ENCODE measurements at regions of chr13 and their contacts with region 1.

Region 1: DNA sequence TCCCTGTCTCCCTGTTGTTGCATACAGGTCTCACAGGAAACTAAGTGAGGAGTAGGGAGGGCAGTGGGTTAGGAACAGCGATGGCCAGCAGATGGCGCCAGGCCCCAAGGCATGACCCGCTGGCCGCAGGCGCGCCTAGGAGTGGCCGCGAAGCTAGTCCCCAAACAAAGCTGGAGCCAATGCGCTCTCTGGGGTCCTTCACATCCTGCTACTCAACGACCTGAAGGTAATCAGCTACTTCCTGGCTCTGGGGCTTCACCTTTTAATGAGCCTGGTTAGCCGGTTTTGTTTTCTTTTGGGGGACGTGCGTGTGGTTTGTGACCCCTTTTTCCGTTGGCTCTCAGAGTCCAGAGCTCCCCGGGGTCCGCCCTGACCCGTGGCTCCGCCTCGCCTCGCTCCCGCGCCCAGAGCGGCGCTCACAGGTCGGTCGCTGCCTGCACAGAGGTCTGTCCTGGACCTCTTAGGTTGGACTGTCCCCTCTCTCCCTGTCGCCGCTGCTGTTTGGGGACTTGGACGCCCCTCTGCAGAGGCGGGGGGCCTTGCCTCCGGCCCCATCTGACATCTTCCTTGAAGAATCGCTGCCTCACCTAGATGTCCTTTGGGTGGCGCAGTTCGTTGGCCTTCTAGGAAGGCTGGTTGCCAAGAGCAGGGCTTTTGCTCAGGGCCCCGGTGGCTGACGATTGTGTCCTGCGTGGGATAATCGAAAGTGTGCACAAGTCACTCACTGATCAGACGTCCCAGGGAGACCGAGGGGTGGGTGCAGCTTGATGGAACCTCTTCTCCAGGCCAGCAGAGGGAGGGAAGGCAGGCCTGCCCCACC is 62.1 kb upstream of the GTF3A start:
- DNase-seq: peak; percentile 69
- ATAC-seq: peak; percentile 96
- H3K4me3 ChIP-seq: peak overlapping the region; percentile 40 to 55
- H3K27ac ChIP-seq: no peak overlapping the region
- H3K4me1 ChIP-seq: peaks cover 7 to 11% of the 10 kb centered on the region in 2 experiments
- H3K27me3 ChIP-seq: no peaks in the 10 kb centered on the region
- CTCF ChIP-seq: peak; percentile 80 to 91 (median 89)
- POLR2A ChIP-seq: no peak
- RAD21 ChIP-seq: peak; percentile 93

Region 2: GRCh38 chr13:26971990-26972887 is 390.0 kb before region 1 on chr13:
- CTCF ChIA-PET with region 1: interaction called, 12 read pairs
- POLR2A ChIA-PET with region 1: no interaction called
- RAD21 ChIA-PET with region 1: no interaction called
- intact Hi-C with region 1: no loop called
- DNase-seq: peak; percentile 26
- ATAC-seq: peak; percentile 77
- H3K4me3 ChIP-seq: no peak overlapping the region
- H3K27ac ChIP-seq: no peak overlapping the region; the same call in 1 of the 2 replicates
- H3K4me1 ChIP-seq: no peaks in the 10 kb centered on the region
- H3K27me3 ChIP-seq: no peaks in the 10 kb centered on the region
- CTCF ChIP-seq: peak in 2 of 3 experiments; percentile 35 to 51; a peak in 4 of 6 replicates
- POLR2A ChIP-seq: no peak
- RAD21 ChIP-seq: peak; percentile 31; the same call in 1 of the 2 replicates

Region 3: GRCh38 chr13:27177852-27178251 is 184.4 kb before region 1 on chr13:
- CTCF ChIA-PET with region 1: no interaction called
- POLR2A ChIA-PET with region 1: no interaction called
- RAD21 ChIA-PET with region 1: no interaction called
- intact Hi-C with region 1: loop called (anchors 5 kb)
- DNase-seq: no peak
- ATAC-seq: peak; percentile 83
- H3K4me3 ChIP-seq: no peak overlapping the region
- H3K27ac ChIP-seq: no peak overlapping the region
- H3K4me1 ChIP-seq: peaks cover 11 to 14% of the 10 kb centered on the region in 2 experiments; a peak in 3 of 4 replicates
- H3K27me3 ChIP-seq: no peaks in the 10 kb centered on the region
- CTCF ChIP-seq: peak; percentile 5 to 40 (median 33); a peak in 3 of 6 replicates
- POLR2A ChIP-seq: no peak
- RAD21 ChIP-seq: peak; percentile 52

Region 4: GRCh38 chr13:27309967-27310598 is 52.2 kb before region 1 on chr13:
- CTCF ChIA-PET with region 1: no interaction called
- POLR2A ChIA-PET with region 1: no interaction called
- RAD21 ChIA-PET with region 1: no interaction called
- intact Hi-C with region 1: no loop called
- DNase-seq: peak; percentile 56
- ATAC-seq: peak; percentile 76
- H3K4me3 ChIP-seq: peak overlapping the region in 1 of 2 experiments; percentile 25; a peak in 2 of 4 replicates
- H3K27ac ChIP-seq: peak overlapping the region; percentile 31; the same call in 1 of the 2 replicates
- H3K4me1 ChIP-seq: peaks cover 20 to 36% of the 10 kb centered on the region in 2 experiments
- H3K27me3 ChIP-seq: no peaks in the 10 kb centered on the region
- CTCF ChIP-seq: no peak
- POLR2A ChIP-seq: no peak
- RAD21 ChIP-seq: no peak

Region 5: GRCh38 chr13:27374650-27375049 is 12.4 kb after region 1 on chr13:
- CTCF ChIA-PET with region 1: interaction called, 31 read pairs
- POLR2A ChIA-PET with region 1: interaction called, 3 read pairs
- RAD21 ChIA-PET with region 1: interaction called in 1 of 2 experiments, 3 read pairs
- intact Hi-C with region 1: no loop called
- DNase-seq: peak; percentile 85
- ATAC-seq: peak; percentile 96
- H3K4me3 ChIP-seq: no peak overlapping the region
- H3K27ac ChIP-seq: no peak overlapping the region
- H3K4me1 ChIP-seq: peaks cover 12 to 22% of the 10 kb centered on the region in 2 experiments; a peak in 3 of 4 replicates
- H3K27me3 ChIP-seq: no peaks in the 10 kb centered on the region
- CTCF ChIP-seq: peak; percentile 67 to 82 (median 79); a peak in 5 of 6 replicates
- POLR2A ChIP-seq: no peak
- RAD21 ChIP-seq: peak; percentile 80

Region 6: GRCh38 chr13:27953676-27954405 is 591.6 kb after region 1 on chr13:
- CTCF ChIA-PET with region 1: interaction called, 39 read pairs
- POLR2A ChIA-PET with region 1: no interaction called
- RAD21 ChIA-PET with region 1: interaction called in 1 of 2 experiments, 6 read pairs
- intact Hi-C with region 1: no loop called
- DNase-seq: peak; percentile 54
- ATAC-seq: peak; percentile 99
- H3K4me3 ChIP-seq: peak overlapping the region; percentile 41 to 58
- H3K27ac ChIP-seq: peak overlapping the region; percentile 56
- H3K4me1 ChIP-seq: peaks cover 9 to 15% of the 10 kb centered on the region in 2 experiments; a peak in 3 of 4 replicates
- H3K27me3 ChIP-seq: no peaks in the 10 kb centered on the region
- CTCF ChIP-seq: peak; percentile 75 to 95 (median 90)
- POLR2A ChIP-seq: no peak
- RAD21 ChIP-seq: peak; percentile 80

Region 7: GRCh38 chr13:27997904-27998522 is 635.7 kb after region 1 on chr13:
- CTCF ChIA-PET with region 1: interaction called, 11 read pairs
- POLR2A ChIA-PET with region 1: no interaction called
- RAD21 ChIA-PET with region 1: no interaction called
- intact Hi-C with region 1: no loop called
- DNase-seq: peak; percentile 70
- ATAC-seq: peak; percentile 98
- H3K4me3 ChIP-seq: no peak overlapping the region
- H3K27ac ChIP-seq: peak overlapping the region; percentile 5; the same call in 1 of the 2 replicates
- H3K4me1 ChIP-seq: peaks cover 0 to 9% of the 10 kb centered on the region in 2 experiments; a peak in 2 of 4 replicates
- H3K27me3 ChIP-seq: no peaks in the 10 kb centered on the region
- CTCF ChIP-seq: peak; percentile 67 to 89 (median 73)
- POLR2A ChIP-seq: no peak
- RAD21 ChIP-seq: peak; percentile 79